Panc1 (cell line): ENCODE measurements at regions of chr12 and their contacts with region 1.

Region 1: DNA sequence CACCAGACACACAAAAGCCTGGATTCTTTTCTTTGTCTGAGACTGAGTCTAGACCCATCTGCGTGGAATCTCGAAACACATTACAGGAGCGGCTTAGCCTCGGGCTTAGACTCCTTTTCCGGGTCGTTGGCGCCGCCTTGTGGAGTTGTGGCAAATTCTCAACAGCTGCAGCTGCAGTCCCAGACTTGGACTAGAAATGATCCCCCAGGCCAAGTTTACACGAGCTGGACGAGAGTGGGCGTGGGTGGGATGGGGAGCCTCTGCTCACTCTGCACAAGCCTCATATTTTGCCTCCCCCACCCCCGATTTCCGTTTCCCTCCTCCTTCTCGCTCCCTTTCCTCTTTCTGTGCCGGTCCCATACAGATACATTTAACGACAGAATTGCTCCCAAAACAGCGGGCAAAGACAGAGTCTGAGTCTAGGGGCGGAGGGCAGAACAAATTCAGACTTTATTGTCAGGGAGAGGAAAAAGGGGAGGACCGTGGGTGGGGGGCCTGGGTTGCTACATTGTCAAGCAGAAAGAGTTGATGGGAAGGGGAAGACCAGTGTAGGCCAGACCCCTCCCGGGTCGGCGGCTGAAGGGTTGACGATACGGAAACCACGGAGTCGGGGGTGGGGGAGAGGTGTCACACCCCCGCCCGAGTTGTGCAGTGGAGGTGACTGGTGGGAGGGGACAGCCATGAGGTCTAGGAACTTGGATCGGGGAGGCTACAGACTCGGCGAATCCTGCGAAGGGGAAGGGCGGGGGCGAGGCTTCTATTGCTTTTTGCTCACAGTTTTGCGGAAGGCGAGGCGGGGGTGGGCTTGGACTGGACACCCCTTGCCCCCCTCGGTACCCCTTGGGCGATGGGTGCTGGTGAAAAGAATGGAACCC is 4.7 kb upstream of the GPR84 start:
- DNase-seq: peak; percentile 79
- ATAC-seq: peak; percentile 79
- H3K4me3 ChIP-seq: peak overlapping the region; percentile 42 to 75
- H3K27ac ChIP-seq: peak overlapping the region; percentile 72
- H3K4me1 ChIP-seq: no peaks in the 10 kb centered on the region; the same call in 1 of the 2 replicates
- H3K27me3 ChIP-seq: no peaks in the 10 kb centered on the region
- CTCF ChIP-seq: peak; percentile 93

Region 2: GRCh38 chr12:54225666-54226065 is 143.3 kb before region 1 on chr12:
- CTCF ChIA-PET with region 1: interaction called, 11 read pairs
- POLR2A ChIA-PET with region 1: no interaction called
- in situ Hi-C with region 1: no loop called
- intact Hi-C with region 1: no loop called
- DNase-seq: no peak
- ATAC-seq: no peak
- H3K4me3 ChIP-seq: no peak overlapping the region
- H3K27ac ChIP-seq: no peak overlapping the region
- H3K4me1 ChIP-seq: peaks cover 12% of the 10 kb centered on the region
- H3K27me3 ChIP-seq: no peaks in the 10 kb centered on the region
- CTCF ChIP-seq: no peak

Region 3: DNA sequence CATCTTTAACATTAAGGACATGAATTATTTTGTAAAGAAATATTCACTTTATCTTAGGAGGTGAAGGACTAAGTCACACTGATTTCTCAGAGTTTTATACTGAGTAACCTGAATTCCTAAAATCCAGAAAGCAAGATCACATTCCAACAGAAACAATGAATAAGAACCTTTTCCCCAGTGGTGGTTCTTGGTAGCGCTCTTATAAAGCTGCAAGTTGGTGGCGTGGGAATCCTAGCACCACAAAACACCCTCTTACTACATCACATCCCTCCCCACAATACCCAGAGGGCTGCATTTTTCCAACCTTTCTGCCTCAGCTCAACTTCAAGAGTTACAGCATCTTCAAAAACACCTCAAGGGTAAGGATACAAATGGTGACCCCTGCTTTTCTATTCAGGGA is 136.2 kb before region 1 on chr12:
- CTCF ChIA-PET with region 1: interaction called, 12 read pairs
- POLR2A ChIA-PET with region 1: no interaction called
- in situ Hi-C with region 1: no loop called
- intact Hi-C with region 1: no loop called
- DNase-seq: no peak
- ATAC-seq: no peak
- H3K4me3 ChIP-seq: no peak overlapping the region
- H3K27ac ChIP-seq: no peak overlapping the region
- H3K4me1 ChIP-seq: peaks cover 14% of the 10 kb centered on the region
- H3K27me3 ChIP-seq: no peaks in the 10 kb centered on the region
- CTCF ChIP-seq: peak; percentile 10; the same call in 1 of the 2 replicates

Region 4: GRCh38 chr12:54379401-54380201 is 10.7 kb after region 1 on chr12:
- CTCF ChIA-PET with region 1: interaction called, 26 read pairs
- POLR2A ChIA-PET with region 1: no interaction called
- in situ Hi-C with region 1: no loop called
- intact Hi-C with region 1: no loop called
- DNase-seq: peak; percentile 73
- ATAC-seq: peak; percentile 93
- H3K4me3 ChIP-seq: peak overlapping the region; percentile 44 to 64
- H3K27ac ChIP-seq: peak overlapping the region; percentile 64; the same call in 1 of the 2 replicates
- H3K4me1 ChIP-seq: peaks cover 2% of the 10 kb centered on the region; the same call in 1 of the 2 replicates
- H3K27me3 ChIP-seq: no peaks in the 10 kb centered on the region
- CTCF ChIP-seq: peak; percentile 100